Prostate gland (tissue), 2 donors: ENCODE measurements at regions of chr1 and their contacts with region 1.

Region 1: GRCh38 chr1:39609618-39610331 is 29.7 kb downstream of the HEYL start:
- DNase-seq: peak; percentile 18
- H3K4me3 ChIP-seq: no peak overlapping the region
- H3K27ac ChIP-seq: no peak overlapping the region
- H3K4me1 ChIP-seq: no peaks in the 10 kb centered on the region
- H3K27me3 ChIP-seq: no peaks in the 10 kb centered on the region
- CTCF ChIP-seq: peak in 2 of 4 experiments; percentile 46 to 63
- POLR2A ChIP-seq: no peak

Region 2: DNA sequence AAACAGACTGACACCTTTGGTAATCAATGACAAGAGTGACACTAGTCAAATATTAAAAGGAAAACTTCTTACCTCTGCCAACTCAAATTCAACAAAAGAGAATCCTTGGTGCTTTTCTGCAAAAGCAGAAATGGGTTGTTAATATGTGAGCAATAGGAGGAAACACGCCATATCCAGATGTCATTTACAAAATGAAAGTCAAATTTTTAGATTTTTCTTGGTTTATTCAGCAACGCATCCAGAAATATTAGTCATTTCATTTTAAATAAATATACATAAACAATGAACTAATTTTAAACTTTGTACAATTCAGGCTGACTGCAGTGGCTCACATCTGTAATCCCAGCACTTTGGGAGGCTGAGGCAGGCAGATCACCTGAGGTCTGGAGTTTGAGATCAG is 55.5 kb before region 1 on chr1:
- intact Hi-C with region 1: no loop called
- DNase-seq: no peak
- H3K4me3 ChIP-seq: no peak overlapping the region
- H3K27ac ChIP-seq: no peak overlapping the region
- H3K4me1 ChIP-seq: no peaks in the 10 kb centered on the region
- H3K27me3 ChIP-seq: no peaks in the 10 kb centered on the region
- CTCF ChIP-seq: no peak
- POLR2A ChIP-seq: no peak

Region 3: DNA sequence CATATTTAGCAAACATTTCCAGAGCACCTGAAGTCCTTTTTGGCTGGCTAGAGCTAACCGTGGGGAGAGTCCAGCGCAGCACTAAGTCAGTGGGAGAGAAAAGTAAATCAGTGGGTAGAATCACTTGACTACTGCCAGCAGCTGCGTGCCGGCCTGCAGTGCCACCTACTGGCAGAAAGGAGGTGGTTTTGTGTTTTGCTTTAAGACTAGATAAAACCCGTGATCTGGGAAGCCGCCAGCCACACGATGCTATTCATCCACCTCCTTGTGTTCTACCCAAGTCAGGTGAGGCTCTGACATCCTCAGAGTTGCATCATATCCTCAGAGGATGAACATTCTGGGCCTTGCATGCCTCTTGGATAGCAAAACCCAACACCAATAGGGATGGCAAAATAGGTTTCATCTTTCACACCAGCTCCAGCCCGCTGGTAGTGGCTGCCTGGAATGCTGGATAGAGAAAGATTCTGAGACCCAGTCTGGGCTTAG is 43.8 kb after region 1 on chr1:
- intact Hi-C with region 1: loop called (anchors 2 kb)
- DNase-seq: peak; percentile 77
- H3K4me3 ChIP-seq: no peak overlapping the region
- H3K27ac ChIP-seq: peak overlapping the region in 1 of 2 donors; percentile 16
- H3K4me1 ChIP-seq: no peaks in the 10 kb centered on the region
- H3K27me3 ChIP-seq: no peaks in the 10 kb centered on the region
- CTCF ChIP-seq: peak; percentile 75 to 93 (median 89)
- POLR2A ChIP-seq: no peak

Region 4: GRCh38 chr1:39720094-39720999 is 110.6 kb after region 1 on chr1:
- intact Hi-C with region 1: loop called (anchors 5 kb)
- DNase-seq: no peak
- H3K4me3 ChIP-seq: no peak overlapping the region
- H3K27ac ChIP-seq: no peak overlapping the region
- H3K4me1 ChIP-seq: no peaks in the 10 kb centered on the region
- H3K27me3 ChIP-seq: no peaks in the 10 kb centered on the region
- CTCF ChIP-seq: peak in 3 of 4 experiments; percentile 76 to 85 (median 83)
- POLR2A ChIP-seq: no peak

Region 5: DNA sequence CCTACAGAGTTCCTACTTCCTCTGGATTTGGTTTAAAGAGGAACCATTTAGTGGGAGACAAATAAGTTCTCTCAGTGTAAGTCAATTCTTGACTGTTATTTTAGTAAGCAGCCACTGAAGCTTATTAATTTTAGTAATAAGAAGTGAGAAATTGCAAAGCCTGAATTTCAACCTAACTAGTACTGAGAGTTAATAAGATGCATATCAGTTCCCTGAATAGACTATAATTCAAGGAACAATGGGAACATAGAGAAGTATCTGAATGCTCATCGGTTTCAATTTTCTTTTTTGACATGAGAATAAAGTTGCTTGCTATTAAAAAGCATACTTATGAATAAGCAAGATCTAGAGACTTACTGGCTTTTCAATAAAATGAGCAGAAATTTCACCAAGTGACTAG is 495.3 kb after region 1 on chr1:
- intact Hi-C with region 1: no loop called
- DNase-seq: no peak
- H3K4me3 ChIP-seq: no peak overlapping the region
- H3K27ac ChIP-seq: no peak overlapping the region
- H3K4me1 ChIP-seq: no peaks in the 10 kb centered on the region
- H3K27me3 ChIP-seq: no peaks in the 10 kb centered on the region
- CTCF ChIP-seq: no peak
- POLR2A ChIP-seq: no peak